ENCODE measurements at regions of chr12 and their contacts with region 1.

Region 1: DNA sequence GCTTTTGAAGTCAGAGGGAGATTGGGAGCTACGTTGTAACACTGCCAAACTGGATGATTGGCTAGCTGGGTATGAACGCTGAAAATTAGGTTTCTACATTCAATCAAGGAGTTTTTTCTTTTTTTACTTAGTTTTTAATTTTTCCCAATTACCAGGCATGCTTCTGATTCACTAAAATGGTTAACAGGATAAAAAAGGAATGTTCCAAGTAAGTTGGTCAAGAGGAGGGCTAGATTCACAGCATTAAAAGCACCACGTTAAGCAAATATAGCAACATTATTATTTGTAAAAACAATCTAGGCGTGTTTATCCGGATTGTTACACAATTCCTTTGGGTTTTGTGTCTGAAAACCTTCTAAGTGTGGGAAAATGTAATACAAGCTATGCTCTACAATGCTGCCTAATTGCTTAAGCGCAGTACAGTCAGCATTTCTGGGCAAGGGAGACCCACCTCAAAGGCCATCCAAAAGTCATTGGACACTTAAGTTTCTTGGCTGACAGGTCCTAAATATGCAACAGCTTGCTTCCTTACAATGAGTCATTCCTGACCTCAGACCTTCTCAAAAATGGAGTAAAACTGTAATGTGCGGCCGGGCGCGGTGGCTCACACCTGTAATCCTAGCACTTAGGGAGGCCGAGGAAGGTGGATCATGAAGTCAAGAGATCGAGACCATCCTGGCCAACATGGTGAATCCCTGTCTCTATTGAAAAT is 1.2 kb downstream of the RPLP0 start:
- DNase-seq: peak; percentile 23 to 63
- H3K4me3 ChIP-seq: peak overlapping the region; percentile 64
- H3K27ac ChIP-seq: peak overlapping the region; percentile 93
- H3K4me1 ChIP-seq: peaks cover 46% of the 10 kb centered on the region
- H3K27me3 ChIP-seq: no peaks in the 10 kb centered on the region
- CTCF ChIP-seq: no peak

Region 2: DNA sequence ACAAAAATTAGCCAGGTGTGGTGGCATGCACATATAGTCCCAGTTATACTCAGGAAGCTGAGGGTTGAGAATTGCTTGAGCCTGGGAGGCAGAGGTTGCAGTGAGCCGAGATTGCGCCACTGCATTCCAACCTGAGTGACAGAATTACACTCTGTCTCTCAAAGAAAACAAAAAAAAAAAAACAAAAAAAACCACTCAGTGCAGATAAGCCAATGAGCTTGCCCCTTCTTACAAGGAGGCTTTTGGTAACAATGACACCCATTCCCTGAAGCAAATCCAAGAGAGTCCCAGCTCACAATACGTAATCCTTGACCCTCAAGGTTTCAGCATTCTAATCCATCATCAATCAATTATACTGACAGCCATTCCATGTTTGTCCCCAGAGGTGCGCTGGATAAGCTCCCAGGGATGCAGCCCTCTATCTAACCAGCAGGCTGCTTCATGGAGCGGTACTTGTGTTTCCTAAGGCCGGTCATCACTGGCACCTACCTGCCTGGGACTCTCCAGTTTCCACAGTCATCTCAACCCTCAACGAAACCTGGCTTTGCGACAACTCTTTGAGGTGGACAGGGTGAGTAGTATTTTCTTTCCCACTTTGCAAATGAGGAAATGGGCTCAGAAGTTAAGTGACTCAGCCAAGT is 17.6 kb before region 1 on chr12:
- CTCF ChIA-PET with region 1: interaction called, 9 read pairs
- POLR2A ChIA-PET with region 1: interaction called, 14 read pairs
- intact Hi-C with region 1: no loop called
- DNase-seq: peak; percentile 61 to 88
- H3K4me3 ChIP-seq: no peak overlapping the region
- H3K27ac ChIP-seq: peak overlapping the region; percentile 84
- H3K4me1 ChIP-seq: peaks cover 27% of the 10 kb centered on the region
- H3K27me3 ChIP-seq: no peaks in the 10 kb centered on the region
- CTCF ChIP-seq: no peak

Region 3: GRCh38 chr12:120234643-120235368 is 35.1 kb after region 1 on chr12:
- CTCF ChIA-PET with region 1: interaction called, 8 read pairs
- POLR2A ChIA-PET with region 1: interaction called, 14 read pairs
- intact Hi-C with region 1: no loop called
- DNase-seq: peak; percentile 79
- H3K4me3 ChIP-seq: no peak overlapping the region
- H3K27ac ChIP-seq: peak overlapping the region; percentile 99; the same call in 1 of the 2 replicates
- H3K4me1 ChIP-seq: peaks cover 59% of the 10 kb centered on the region
- H3K27me3 ChIP-seq: no peaks in the 10 kb centered on the region
- CTCF ChIP-seq: peak; percentile 60

Region 4: DNA sequence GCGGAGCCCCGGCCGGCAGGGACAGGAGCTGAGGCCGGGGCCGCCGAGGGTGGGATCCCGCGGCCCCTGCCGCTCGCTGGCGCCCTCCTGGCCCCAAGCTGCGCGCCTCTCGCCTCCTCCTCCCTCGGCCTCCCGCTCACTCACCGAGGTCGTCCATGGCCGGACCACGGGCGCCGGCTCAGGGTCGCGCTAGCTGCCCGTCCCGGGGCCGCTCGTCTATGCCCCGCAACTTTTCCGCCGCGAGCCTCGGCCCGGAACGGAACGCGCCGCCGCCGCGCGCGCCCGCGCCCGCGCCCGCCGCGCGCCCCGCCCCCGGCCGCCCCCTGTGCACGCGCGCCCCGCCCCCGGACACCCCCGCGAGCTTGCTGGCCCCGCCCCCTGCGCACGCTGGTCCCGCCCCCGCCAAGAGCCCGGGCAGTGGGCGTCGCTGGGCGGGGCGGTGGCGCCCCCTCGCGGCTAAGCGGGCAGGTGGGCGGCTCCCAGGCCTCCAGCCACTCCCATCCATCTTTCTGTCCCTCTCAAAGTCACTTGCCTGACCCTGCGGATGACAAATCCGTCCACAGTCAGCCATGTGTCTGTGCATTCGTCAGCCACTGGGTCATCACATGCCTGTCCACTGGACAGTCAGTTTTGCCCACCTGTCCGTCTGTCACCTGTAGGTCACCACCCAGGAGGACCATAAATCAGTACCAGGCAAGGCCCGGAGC is 65.9 kb after region 1 on chr12 and contains the start of gene PXN:
- CTCF ChIA-PET with region 1: interaction called, 13 read pairs
- POLR2A ChIA-PET with region 1: interaction called, 7 read pairs
- intact Hi-C with region 1: loop called (anchors 1 kb)
- DNase-seq: peak; percentile 52 to 92
- H3K4me3 ChIP-seq: peak within 1 kb of the TSS; percentile 76
- H3K27ac ChIP-seq: peak within 1 kb of the TSS; percentile 19
- H3K4me1 ChIP-seq: peaks cover 33% of the 10 kb centered on the region
- H3K27me3 ChIP-seq: no peaks in the 10 kb centered on the region
- CTCF ChIP-seq: peak; percentile 65
- total RNA-seq, gene PXN: 191 and 218 TPM in 2 replicates

Region 5: GRCh38 chr12:120388691-120389481 is 189.1 kb after region 1 on chr12:
- CTCF ChIA-PET with region 1: no interaction called
- POLR2A ChIA-PET with region 1: no interaction called
- intact Hi-C with region 1: no loop called
- DNase-seq: no peak
- H3K4me3 ChIP-seq: no peak overlapping the region
- H3K27ac ChIP-seq: no peak overlapping the region
- H3K4me1 ChIP-seq: peaks cover 2% of the 10 kb centered on the region
- H3K27me3 ChIP-seq: no peaks in the 10 kb centered on the region
- CTCF ChIP-seq: no peak

Region 6: DNA sequence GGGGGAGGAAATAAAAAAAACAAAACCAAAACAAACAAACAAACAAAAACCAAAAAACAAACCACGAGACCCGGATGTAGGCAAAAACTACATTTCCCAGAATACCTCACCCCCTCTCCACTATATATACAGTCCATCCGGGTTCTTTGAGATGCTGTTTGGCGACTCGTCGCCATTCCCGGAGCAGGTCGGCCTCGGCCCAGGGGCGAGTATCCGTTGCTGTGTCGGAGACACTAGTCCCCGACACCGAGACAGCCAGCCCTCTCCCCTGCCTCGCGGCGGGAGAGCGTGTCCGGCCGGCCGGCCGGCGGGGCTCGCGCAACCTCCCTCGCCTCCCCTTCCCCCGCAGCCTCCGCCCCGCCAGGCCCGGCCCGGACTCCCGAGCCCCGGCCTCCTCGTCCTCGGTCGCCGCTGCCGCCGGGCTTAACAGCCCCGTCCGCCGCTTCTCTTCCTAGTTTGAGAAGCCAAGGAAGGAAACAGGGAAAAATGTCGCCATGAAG is 334.5 kb after region 1 on chr12 and contains the start of gene RNF10:
- CTCF ChIA-PET with region 1: no interaction called
- POLR2A ChIA-PET with region 1: interaction called, 17 read pairs
- intact Hi-C with region 1: no loop called
- DNase-seq: peak; percentile 64 to 67
- H3K4me3 ChIP-seq: peak within 1 kb of the TSS; percentile 97
- H3K27ac ChIP-seq: peak within 1 kb of the TSS; percentile 60
- H3K4me1 ChIP-seq: peaks cover 55% of the 10 kb centered on the region
- H3K27me3 ChIP-seq: no peaks in the 10 kb centered on the region
- CTCF ChIP-seq: no peak
- total RNA-seq, gene RNF10: 196 and 241 TPM in 2 replicates

Measured in PC-9 (cell line).